Lower leg skin (tissue), 4 donors: ENCODE measurements at regions of chr7 and their contacts with region 1.

Region 1: DNA sequence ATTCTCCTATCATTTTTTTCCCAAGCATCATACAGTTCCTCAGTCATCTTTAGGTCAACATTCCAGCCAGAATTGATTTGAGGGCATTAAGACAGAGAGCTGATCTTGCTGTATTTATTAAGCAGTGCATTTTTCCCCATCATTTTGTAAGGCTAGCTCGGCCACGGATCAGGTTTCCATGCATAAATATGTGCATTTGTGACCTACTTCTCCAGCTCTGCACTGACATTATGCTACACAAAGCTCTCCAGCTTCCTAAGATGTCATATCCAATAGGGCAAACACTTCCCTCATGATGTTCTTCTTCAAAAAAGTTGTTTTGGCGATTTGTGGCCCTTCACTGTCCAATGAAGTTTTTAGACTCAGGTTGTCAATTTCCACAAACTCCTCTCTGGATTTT is 202.6 kb downstream of the C7orf25 start:
- DNase-seq: no peak
- H3K4me3 ChIP-seq: no peak overlapping the region
- CTCF ChIP-seq: no peak
- POLR2A ChIP-seq: no peak

Region 2: GRCh38 chr7:42666994-42667393 is 42.3 kb before region 1 on chr7:
- intact Hi-C with region 1: loop called (anchors 5 kb)
- DNase-seq: no peak
- H3K4me3 ChIP-seq: no peak overlapping the region
- CTCF ChIP-seq: no peak
- POLR2A ChIP-seq: no peak

Region 3: GRCh38 chr7:43431020-43431595 is 721.8 kb after region 1 on chr7:
- intact Hi-C with region 1: no loop called
- DNase-seq: no peak
- H3K4me3 ChIP-seq: no peak overlapping the region
- CTCF ChIP-seq: no peak
- POLR2A ChIP-seq: no peak